ENCODE measurements at regions of chr15 and their contacts with region 1.

Region 1: GRCh38 chr15:63860155-63860554 is 26.4 kb upstream of the HERC1 start:
- DNase-seq: peak; percentile 78
- ATAC-seq: peak; percentile 74
- H3K4me3 Mint-ChIP-seq: no peak overlapping the region
- H3K27ac Mint-ChIP-seq: peak overlapping the region; percentile 85
- H3K4me1 Mint-ChIP-seq: peaks cover 35% of the 10 kb centered on the region
- H3K27me3 Mint-ChIP-seq: no peaks in the 10 kb centered on the region
- CTCF ChIP-seq: no peak

Region 2: GRCh38 chr15:63848499-63849214 is 11.5 kb before region 1 on chr15:
- CTCF ChIA-PET with region 1: interaction called, 10 read pairs
- POLR2A ChIA-PET with region 1: interaction called, 3 read pairs
- intact Hi-C with region 1: no loop called
- DNase-seq: no peak
- ATAC-seq: peak; percentile 20
- H3K4me3 Mint-ChIP-seq: no peak overlapping the region
- H3K27ac Mint-ChIP-seq: no peak overlapping the region
- H3K4me1 Mint-ChIP-seq: peaks cover 9% of the 10 kb centered on the region
- H3K27me3 Mint-ChIP-seq: no peaks in the 10 kb centered on the region
- CTCF ChIP-seq: no peak